Left cardiac atrium (tissue), 4 donors: ENCODE measurements at regions of chr2 and their contacts with region 1.

Region 1: GRCh38 chr2:56009758-56010458 is 86.3 kb upstream of the EFEMP1 start:
- DNase-seq: no peak
- ATAC-seq: peak in 1 of 2 donors; percentile 53

Region 2: GRCh38 chr2:55718165-55719008 is 291.5 kb before region 1 on chr2:
- intact Hi-C with region 1: loop called (anchors 2 to 5 kb)
- DNase-seq: peak; percentile 45
- ATAC-seq: peak in 1 of 2 donors; percentile 48

Region 3: DNA sequence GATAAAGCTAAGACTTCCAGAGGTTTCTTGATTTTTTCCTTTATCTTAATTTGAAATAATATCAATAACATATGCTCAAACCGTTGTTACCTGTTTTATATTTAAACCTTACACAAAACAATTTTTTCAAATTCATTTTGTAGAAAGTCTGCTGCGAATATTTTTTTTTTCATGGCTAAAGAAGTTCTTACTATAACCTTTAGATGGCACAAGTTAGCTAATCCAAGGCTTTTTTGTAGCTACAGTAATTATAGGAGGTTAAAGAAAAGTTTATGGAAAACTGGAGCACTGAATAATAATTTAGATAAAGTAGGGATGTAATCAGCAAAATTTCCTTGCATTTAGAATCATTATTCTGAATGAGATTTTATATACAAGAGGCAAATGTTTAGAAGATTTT is 238.3 kb before region 1 on chr2:
- intact Hi-C with region 1: loop called in 1 of 2 experiments (anchors 2 kb)
- DNase-seq: no peak
- ATAC-seq: peak in 1 of 2 donors; percentile 51